ENCODE measurements at regions of chr6 and their contacts with region 1.

Region 1: DNA sequence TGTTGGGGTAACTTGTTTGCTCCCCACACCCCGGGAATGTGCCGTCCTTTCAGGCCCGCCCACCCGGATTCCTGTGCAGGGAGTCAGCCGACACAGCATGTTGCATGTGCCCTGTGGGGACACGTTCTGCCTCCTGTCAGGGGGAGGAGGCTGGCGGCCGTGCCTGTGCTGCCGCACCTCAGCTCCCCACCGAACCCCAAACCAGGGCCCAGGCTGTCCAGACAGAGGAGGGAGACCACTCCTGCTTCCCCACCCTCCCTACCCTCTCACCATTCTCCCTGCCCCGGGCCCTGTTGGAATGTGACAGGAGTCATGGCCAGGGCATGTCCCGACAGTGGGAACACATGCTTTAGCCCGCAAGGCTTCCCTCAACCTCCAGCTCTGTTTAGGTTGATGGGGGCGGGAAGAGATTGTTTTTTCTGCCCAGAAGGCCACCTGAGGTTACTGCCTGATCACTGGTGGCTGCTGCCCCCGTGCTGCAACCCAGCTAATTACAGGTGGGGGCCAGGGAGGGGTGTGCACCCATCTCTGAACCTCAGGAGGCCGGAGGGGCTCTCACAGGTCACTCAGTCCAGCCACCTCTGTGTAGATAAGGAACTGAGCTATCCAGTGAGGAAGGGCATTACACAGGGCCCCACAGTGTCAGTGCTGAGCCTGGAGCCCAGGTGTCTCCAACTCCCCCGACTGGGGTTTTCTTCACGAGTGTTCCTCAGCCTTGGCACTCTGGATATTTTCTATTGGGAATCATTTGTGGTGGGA is 13.6 kb downstream of the LRRC73 start:
- DNase-seq: peak in 1 of 2 experiments; percentile 72
- H3K4me3 ChIP-seq: no peak overlapping the region
- H3K27ac ChIP-seq: no peak overlapping the region
- H3K4me1 ChIP-seq: peaks cover 7 to 19% (median 11%) of the 10 kb centered on the region in 4 experiments
- H3K27me3 ChIP-seq: no peaks in the 10 kb centered on the region
- CTCF ChIP-seq: peak; percentile 71 to 88 (median 79)
- EP300 ChIP-seq: no peak
- POLR2A ChIP-seq: no peak
- RAD21 ChIP-seq: peak; percentile 90 to 91

Region 2: DNA sequence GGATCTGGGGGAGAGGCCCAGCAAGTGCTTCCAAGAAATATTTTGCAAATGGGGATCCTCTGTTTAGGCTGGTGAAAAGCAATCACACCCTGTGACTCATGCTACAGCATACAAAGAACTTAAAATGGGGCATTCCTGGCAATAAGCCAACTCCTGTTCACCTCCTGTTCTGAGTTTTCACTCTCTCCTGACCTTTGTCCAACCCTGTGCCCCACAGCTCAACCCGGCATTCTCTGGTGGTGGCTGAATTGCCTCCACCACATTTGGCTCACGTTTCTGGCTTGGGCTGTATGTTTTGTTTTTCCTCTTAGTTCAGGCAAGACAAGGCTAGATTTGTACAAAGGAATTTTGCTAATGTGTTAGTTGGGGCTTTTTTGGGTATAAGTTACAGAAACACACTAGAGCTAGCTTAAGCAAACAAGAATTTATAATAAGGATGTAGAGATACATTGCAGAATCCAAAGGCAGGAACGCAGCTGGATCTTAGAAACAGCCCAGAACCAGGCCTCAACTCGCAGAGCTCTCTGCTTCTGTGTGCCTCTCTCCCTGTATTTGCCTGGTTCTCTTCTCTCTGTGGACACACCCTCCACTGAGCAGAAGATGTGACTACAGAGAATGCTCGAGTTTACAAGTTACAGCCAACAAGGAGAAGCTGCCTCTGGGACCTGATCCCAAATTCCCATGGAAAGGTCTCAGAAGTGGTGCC is 59.8 kb before region 1 on chr6:
- CTCF ChIA-PET with region 1: interaction called, 20 read pairs
- POLR2A ChIA-PET with region 1: interaction called, 3 read pairs
- DNase-seq: no peak
- H3K4me3 ChIP-seq: no peak overlapping the region
- H3K27ac ChIP-seq: no peak overlapping the region
- H3K4me1 ChIP-seq: no peaks in the 10 kb centered on the region; a peak in 2 of 7 replicates
- H3K27me3 ChIP-seq: no peaks in the 10 kb centered on the region
- CTCF ChIP-seq: no peak
- EP300 ChIP-seq: no peak
- POLR2A ChIP-seq: no peak
- RAD21 ChIP-seq: no peak